ENCODE measurements at regions of chr1 and their contacts with region 1.

Region 1: GRCh38 chr1:21490774-21491553 is 18.3 kb upstream of the ALPL start:
- DNase-seq: peak in 1 of 2 experiments; percentile 20
- H3K4me3 ChIP-seq: no peak overlapping the region
- H3K4me3 Mint-ChIP-seq: no peak overlapping the region
- H3K27ac Mint-ChIP-seq: no peak overlapping the region
- H3K4me1 ChIP-seq: no peaks in the 10 kb centered on the region
- H3K4me1 Mint-ChIP-seq: no peaks in the 10 kb centered on the region
- H3K27me3 ChIP-seq: no peaks in the 10 kb centered on the region
- H3K27me3 Mint-ChIP-seq: no peaks in the 10 kb centered on the region
- CTCF ChIP-seq: no peak

Region 2: GRCh38 chr1:20507564-20508410 is 983.2 kb before region 1 on chr1 and contains the start of gene MUL1:
- CTCF ChIA-PET with region 1: no interaction called
- POLR2A ChIA-PET with region 1: interaction called, 10 read pairs
- intact Hi-C with region 1: no loop called
- DNase-seq: peak; percentile 91 to 93
- H3K4me3 ChIP-seq: peak within 1 kb of the TSS; percentile 87
- H3K4me3 Mint-ChIP-seq: peak within 1 kb of the TSS; percentile 92
- H3K27ac Mint-ChIP-seq: peak within 1 kb of the TSS; percentile 70
- H3K4me1 ChIP-seq: no peaks in the 10 kb centered on the region
- H3K4me1 Mint-ChIP-seq: peaks cover 7% of the 10 kb centered on the region
- H3K27me3 ChIP-seq: no peaks in the 10 kb centered on the region
- H3K27me3 Mint-ChIP-seq: no peaks in the 10 kb centered on the region
- CTCF ChIP-seq: no peak
- total RNA-seq, gene MUL1: 18.3 and 18.7 TPM in 2 replicates